Ascending aorta (tissue), 2 donors: ENCODE measurements at regions of chr4 and their contacts with region 1.

Region 1: GRCh38 chr4:54322818-54323417 is 93.8 kb downstream of the PDGFRA start:
- DNase-seq: peak in 1 of 2 donors; percentile 71
- H3K4me3 ChIP-seq: no peak overlapping the region
- H3K27ac ChIP-seq: no peak overlapping the region
- H3K4me1 ChIP-seq: no peaks in the 10 kb centered on the region
- H3K27me3 ChIP-seq: no peaks in the 10 kb centered on the region
- CTCF ChIP-seq: peak; percentile 35 to 72 (median 53)

Region 2: DNA sequence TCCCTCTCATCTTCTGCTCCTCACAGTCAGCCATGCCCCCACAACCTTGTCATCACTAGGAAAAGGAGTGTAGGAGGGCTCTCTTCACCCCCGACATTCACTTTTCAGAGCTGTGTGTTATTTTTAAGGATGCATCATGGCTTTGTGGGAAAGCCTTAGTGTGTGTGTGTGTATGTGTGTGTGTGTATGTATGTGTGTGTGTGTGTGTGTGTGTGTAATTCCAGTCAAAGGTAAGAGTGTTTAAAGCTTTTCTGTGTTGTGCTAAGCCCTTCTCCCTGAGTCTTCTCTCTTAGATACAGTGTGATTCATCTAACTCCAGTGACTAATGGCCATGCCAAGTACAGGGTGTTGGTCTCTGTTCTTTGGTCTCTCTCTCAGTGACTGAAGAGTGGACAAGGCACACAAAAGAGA is 335.2 kb before region 1 on chr4:
- intact Hi-C with region 1: no loop called
- DNase-seq: no peak
- H3K4me3 ChIP-seq: no peak overlapping the region
- H3K27ac ChIP-seq: no peak overlapping the region
- H3K4me1 ChIP-seq: no peaks in the 10 kb centered on the region
- H3K27me3 ChIP-seq: no peaks in the 10 kb centered on the region
- CTCF ChIP-seq: no peak

Region 3: DNA sequence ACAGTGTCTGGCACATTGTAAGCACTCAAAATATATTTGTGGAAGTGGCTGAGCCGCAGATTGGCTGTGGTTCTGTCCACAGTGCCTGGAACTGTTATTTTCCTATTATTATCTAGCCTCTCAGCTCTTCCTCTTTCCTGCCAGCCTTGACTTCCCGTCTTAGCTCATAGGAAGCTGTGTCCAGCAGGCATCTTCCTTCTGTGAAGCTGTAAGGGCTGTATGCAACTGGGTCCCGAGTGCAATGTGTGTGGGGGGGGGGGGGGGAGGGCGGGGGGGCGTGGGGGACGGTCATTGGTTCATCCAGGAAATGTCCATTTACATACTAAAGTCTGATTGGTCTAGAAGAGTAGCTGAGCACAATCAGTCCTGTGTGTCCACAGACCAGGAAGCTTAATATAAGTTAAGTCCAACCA is 116.9 kb after region 1 on chr4:
- intact Hi-C with region 1: loop called (anchors 1 kb)
- DNase-seq: peak in 1 of 2 donors; percentile 66
- H3K4me3 ChIP-seq: peak overlapping the region; percentile 14 to 41
- H3K27ac ChIP-seq: peak overlapping the region in 1 of 2 donors; percentile 19
- H3K4me1 ChIP-seq: no peaks in the 10 kb centered on the region
- H3K27me3 ChIP-seq: no peaks in the 10 kb centered on the region
- CTCF ChIP-seq: no peak

Region 4: GRCh38 chr4:54840992-54841768 is 518.3 kb after region 1 on chr4:
- intact Hi-C with region 1: loop called (anchors 5 kb)
- DNase-seq: no peak
- H3K4me3 ChIP-seq: no peak overlapping the region
- H3K27ac ChIP-seq: no peak overlapping the region
- H3K4me1 ChIP-seq: no peaks in the 10 kb centered on the region
- H3K27me3 ChIP-seq: no peaks in the 10 kb centered on the region
- CTCF ChIP-seq: peak in 2 of 3 experiments; percentile 21 to 44

Region 5: GRCh38 chr4:54961357-54961975 is 638.5 kb after region 1 on chr4:
- intact Hi-C with region 1: loop called (anchors 2 kb)
- DNase-seq: no peak
- H3K4me3 ChIP-seq: no peak overlapping the region
- H3K27ac ChIP-seq: no peak overlapping the region
- H3K4me1 ChIP-seq: no peaks in the 10 kb centered on the region
- H3K27me3 ChIP-seq: no peaks in the 10 kb centered on the region
- CTCF ChIP-seq: peak in 2 of 3 experiments; percentile 27 to 51